Esophagus muscularis mucosa (tissue), 4 donors: ENCODE measurements at regions of chr14 and their contacts with region 1.

Region 1: GRCh38 chr14:23320774-23321571 is at the start of gene PABPN1:
- DNase-seq: peak; percentile 100
- H3K4me3 ChIP-seq: peak within 1 kb of the TSS; percentile 87 to 99 (median 94)
- H3K27ac ChIP-seq: peak within 1 kb of the TSS; percentile 98 to 99 (median 98)
- H3K4me1 ChIP-seq: peaks cover 16 to 36% (median 27%) of the 10 kb centered on the region in 4 donors
- H3K27me3 ChIP-seq: no peaks in the 10 kb centered on the region
- CTCF ChIP-seq: peak in 1 of 3 experiments; percentile 8
- EP300 ChIP-seq: no peak
- POLR2A ChIP-seq: no peak
- total RNA-seq, gene PABPN1: 44.6 to 68.1 (median 53.9) TPM

Region 2: DNA sequence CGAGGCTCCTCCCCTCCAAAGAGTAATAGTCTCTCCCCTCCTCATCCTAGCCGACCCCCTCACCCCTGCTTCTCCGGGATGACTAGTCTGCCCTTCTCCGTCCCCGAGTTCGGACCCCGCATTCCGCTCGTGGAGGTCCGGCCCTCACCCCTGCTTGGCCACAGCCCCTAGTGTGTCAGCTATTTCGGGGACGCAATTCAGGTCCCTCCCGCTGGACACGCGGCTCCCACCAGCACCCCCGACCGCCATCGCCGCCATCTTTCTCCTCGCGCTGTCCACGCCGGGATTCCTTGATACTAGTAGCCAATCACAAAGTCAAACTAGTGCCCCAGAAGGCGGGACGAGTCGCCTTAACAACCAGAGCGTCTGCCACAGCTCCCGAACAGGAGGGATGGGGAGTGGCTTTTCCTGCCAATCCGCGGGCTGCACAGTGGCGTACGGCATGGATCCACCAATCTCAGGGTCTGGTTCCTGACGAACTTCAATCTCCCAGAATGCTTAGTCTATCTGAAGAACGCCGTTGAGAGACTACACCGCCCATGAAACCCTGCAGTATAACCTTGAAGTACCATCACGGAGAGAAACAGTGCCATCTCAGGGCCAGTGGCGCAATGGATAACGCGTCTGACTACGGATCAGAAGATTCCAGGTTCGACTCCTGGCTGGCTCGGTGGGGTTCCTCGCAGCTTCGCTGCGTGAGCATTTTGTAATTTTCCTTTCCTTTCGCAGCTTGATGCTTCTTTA is 391.7 kb before region 1 on chr14 and contains the start of gene PRMT5:
- intact Hi-C with region 1: loop called (anchors 10 kb)
- DNase-seq: peak; percentile 100
- H3K4me3 ChIP-seq: peak within 1 kb of the TSS; percentile 78 to 93 (median 86)
- H3K27ac ChIP-seq: peak within 1 kb of the TSS; percentile 89 to 96 (median 92)
- H3K4me1 ChIP-seq: peaks cover 13 to 33% (median 31%) of the 10 kb centered on the region in 4 donors
- H3K27me3 ChIP-seq: no peaks in the 10 kb centered on the region
- CTCF ChIP-seq: no peak
- EP300 ChIP-seq: no peak
- POLR2A ChIP-seq: peak; percentile 63
- total RNA-seq, gene PRMT5: 35.5 to 51.0 (median 44.8) TPM

Region 3: GRCh38 chr14:23402296-23403138 is 81.5 kb after region 1 on chr14:
- intact Hi-C with region 1: no loop called
- DNase-seq: no peak
- H3K4me3 ChIP-seq: no peak overlapping the region
- H3K27ac ChIP-seq: no peak overlapping the region
- H3K4me1 ChIP-seq: no peaks in the 10 kb centered on the region
- H3K27me3 ChIP-seq: peaks cover 0 to 15% (median 0%) of the 10 kb centered on the region in 4 donors
- CTCF ChIP-seq: no peak
- EP300 ChIP-seq: no peak
- POLR2A ChIP-seq: no peak

Region 4: GRCh38 chr14:23544511-23545447 is 223.8 kb after region 1 on chr14:
- intact Hi-C with region 1: no loop called
- DNase-seq: no peak
- H3K4me3 ChIP-seq: no peak overlapping the region
- H3K27ac ChIP-seq: peak overlapping the region in 1 of 4 donors; percentile 14
- H3K4me1 ChIP-seq: peaks cover 6 to 13% (median 10%) of the 10 kb centered on the region in 4 donors
- H3K27me3 ChIP-seq: no peaks in the 10 kb centered on the region
- CTCF ChIP-seq: no peak
- EP300 ChIP-seq: no peak
- POLR2A ChIP-seq: no peak

Region 5: DNA sequence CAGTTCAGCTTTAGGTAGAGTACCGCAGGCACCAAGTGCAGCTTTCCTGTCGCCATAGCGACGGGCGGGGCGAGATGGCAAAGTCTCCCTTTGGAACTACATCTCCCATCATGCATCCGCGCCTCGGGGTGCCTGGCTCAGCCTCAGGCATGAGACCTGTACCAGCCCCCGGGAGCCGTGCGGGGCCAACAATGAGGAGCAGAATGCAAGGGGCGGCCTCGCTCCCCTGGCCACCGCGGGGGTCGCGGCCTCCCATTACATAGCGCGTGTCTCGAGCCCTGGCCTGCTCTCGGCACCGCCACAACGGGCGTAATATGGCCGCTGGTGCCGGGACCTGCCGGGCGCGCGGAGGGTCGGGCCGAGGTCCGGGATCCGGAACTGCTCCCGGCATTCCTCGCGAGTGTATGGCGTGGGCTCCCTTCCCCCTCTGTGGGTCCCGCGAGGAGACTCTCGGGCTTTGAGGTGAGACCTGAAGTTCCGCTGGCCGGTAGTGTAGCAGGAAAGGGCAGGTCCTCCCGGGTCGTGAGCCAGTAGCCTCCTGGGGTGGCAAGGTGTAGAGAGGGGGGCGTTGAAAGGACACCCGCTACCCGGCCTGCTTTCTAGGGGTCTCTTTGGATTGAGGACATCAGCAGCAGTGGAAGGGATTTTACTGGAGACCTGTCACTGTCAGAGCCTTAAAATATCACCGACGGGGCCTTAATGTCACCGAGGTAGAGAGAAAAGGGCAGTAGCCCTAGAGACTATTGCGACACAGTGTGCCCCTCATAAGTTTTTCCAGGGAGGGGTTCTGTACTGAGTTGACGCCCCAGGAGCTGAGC is 235.1 kb after region 1 on chr14 and contains the start of gene THTPA:
- intact Hi-C with region 1: loop called (anchors 5 kb)
- DNase-seq: peak; percentile 98
- H3K4me3 ChIP-seq: peak within 1 kb of the TSS; percentile 73 to 92 (median 90)
- H3K27ac ChIP-seq: peak within 1 kb of the TSS; percentile 93 to 98 (median 96)
- H3K4me1 ChIP-seq: peaks cover 22 to 41% (median 38%) of the 10 kb centered on the region in 4 donors
- H3K27me3 ChIP-seq: no peaks in the 10 kb centered on the region
- CTCF ChIP-seq: no peak
- EP300 ChIP-seq: no peak
- POLR2A ChIP-seq: peak; percentile 8
- total RNA-seq, gene THTPA: 18.3 to 20.0 (median 19.7) TPM